Activated CD8-positive, alpha-beta T cell treated with anti-CD3 and anti-CD28 coated beads for 36 hours (primary cell): ENCODE measurements at regions of chr2 and their contacts with region 1.

Region 1: GRCh38 chr2:7672027-7672684 is 754.9 kb downstream of the RNF144A start:
- DNase-seq: peak; percentile 85
- ATAC-seq: peak; percentile 84
- H3K4me3 Mint-ChIP-seq: peak overlapping the region; percentile 50
- H3K27ac Mint-ChIP-seq: peak overlapping the region; percentile 95
- H3K4me1 Mint-ChIP-seq: peaks cover 62% of the 10 kb centered on the region
- H3K27me3 Mint-ChIP-seq: no peaks in the 10 kb centered on the region
- CTCF ChIP-seq: peak; percentile 98

Region 2: GRCh38 chr2:7523481-7524120 is 148.6 kb before region 1 on chr2:
- CTCF ChIA-PET with region 1: interaction called, 13 read pairs
- POLR2A ChIA-PET with region 1: interaction called, 7 read pairs
- intact Hi-C with region 1: no loop called
- DNase-seq: peak; percentile 32
- ATAC-seq: peak; percentile 54
- H3K4me3 Mint-ChIP-seq: peak overlapping the region; percentile 48
- H3K27ac Mint-ChIP-seq: peak overlapping the region; percentile 87
- H3K4me1 Mint-ChIP-seq: peaks cover 72% of the 10 kb centered on the region
- H3K27me3 Mint-ChIP-seq: no peaks in the 10 kb centered on the region
- CTCF ChIP-seq: no peak

Region 3: GRCh38 chr2:7661477-7661876 is 10.7 kb before region 1 on chr2:
- CTCF ChIA-PET with region 1: interaction called, 13 read pairs
- POLR2A ChIA-PET with region 1: no interaction called
- intact Hi-C with region 1: no loop called
- DNase-seq: no peak
- ATAC-seq: no peak
- H3K4me3 Mint-ChIP-seq: no peak overlapping the region
- H3K27ac Mint-ChIP-seq: no peak overlapping the region
- H3K4me1 Mint-ChIP-seq: peaks cover 7% of the 10 kb centered on the region
- H3K27me3 Mint-ChIP-seq: no peaks in the 10 kb centered on the region
- CTCF ChIP-seq: no peak

Region 4: GRCh38 chr2:7697052-7697451 is 24.9 kb after region 1 on chr2:
- CTCF ChIA-PET with region 1: interaction called, 11 read pairs
- POLR2A ChIA-PET with region 1: no interaction called
- intact Hi-C with region 1: no loop called
- DNase-seq: no peak
- ATAC-seq: no peak
- H3K4me3 Mint-ChIP-seq: no peak overlapping the region
- H3K27ac Mint-ChIP-seq: no peak overlapping the region
- H3K4me1 Mint-ChIP-seq: peaks cover 40% of the 10 kb centered on the region
- H3K27me3 Mint-ChIP-seq: no peaks in the 10 kb centered on the region
- CTCF ChIP-seq: no peak

Region 5: GRCh38 chr2:7825591-7826312 is 153.6 kb after region 1 on chr2:
- CTCF ChIA-PET with region 1: no interaction called
- POLR2A ChIA-PET with region 1: no interaction called
- intact Hi-C with region 1: no loop called
- DNase-seq: peak; percentile 76
- ATAC-seq: peak; percentile 94
- H3K4me3 Mint-ChIP-seq: no peak overlapping the region
- H3K27ac Mint-ChIP-seq: peak overlapping the region; percentile 78
- H3K4me1 Mint-ChIP-seq: peaks cover 24% of the 10 kb centered on the region
- H3K27me3 Mint-ChIP-seq: peaks cover 1% of the 10 kb centered on the region
- CTCF ChIP-seq: no peak